ENCODE measurements at regions of chr2 and their contacts with region 1.

Region 1: GRCh38 chr2:61176755-61177726 is 15.1 kb downstream of the C2orf74 start:
- DNase-seq: peak; percentile 88 to 95 (median 94)
- ATAC-seq: peak; percentile 88
- H3K4me3 ChIP-seq: peak overlapping the region; percentile 74 to 87
- H3K4me3 Mint-ChIP-seq: peak overlapping the region; percentile 94
- H3K27ac ChIP-seq: peak overlapping the region; percentile 80 to 95
- H3K27ac Mint-ChIP-seq: peak overlapping the region; percentile 95
- H3K4me1 ChIP-seq: peaks cover 45% of the 10 kb centered on the region
- H3K4me1 Mint-ChIP-seq: peaks cover 52% of the 10 kb centered on the region
- H3K27me3 ChIP-seq: no peaks in the 10 kb centered on the region
- H3K27me3 Mint-ChIP-seq: no peaks in the 10 kb centered on the region
- CTCF ChIP-seq: no peak

Region 2: DNA sequence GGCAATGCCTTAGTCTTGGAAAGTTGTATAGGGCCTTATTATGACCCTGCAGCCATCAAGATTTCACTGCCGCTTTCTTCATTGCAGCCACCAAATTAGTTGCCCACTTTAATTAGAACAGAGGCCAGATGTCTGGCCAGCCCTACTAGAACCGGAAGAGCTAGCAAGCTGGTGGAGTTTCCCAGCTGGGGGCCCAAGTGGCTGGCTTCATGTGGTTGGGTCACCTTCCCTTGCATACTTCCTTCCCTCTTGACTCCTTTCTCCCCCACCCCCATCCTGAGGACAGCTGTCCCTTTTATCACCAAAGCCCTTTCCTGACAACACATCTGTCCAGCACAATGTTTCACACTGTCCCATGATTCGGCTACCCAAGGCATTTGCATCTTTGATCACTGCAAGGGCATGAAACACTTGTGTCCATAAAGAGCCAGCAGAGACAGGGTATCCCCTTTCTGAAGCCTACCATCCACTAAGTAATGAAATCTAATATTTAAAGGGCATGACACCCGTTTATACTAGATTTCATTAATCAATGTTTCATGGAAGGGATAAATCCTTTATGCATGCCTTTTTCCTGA is 810.8 kb before region 1 on chr2:
- CTCF ChIA-PET with region 1: no interaction called
- POLR2A ChIA-PET with region 1: no interaction called
- intact Hi-C with region 1: no loop called
- DNase-seq: peak in 1 of 9 experiments; percentile 14
- ATAC-seq: no peak
- H3K4me3 ChIP-seq: no peak overlapping the region
- H3K4me3 Mint-ChIP-seq: no peak overlapping the region
- H3K27ac ChIP-seq: no peak overlapping the region
- H3K27ac Mint-ChIP-seq: no peak overlapping the region
- H3K4me1 ChIP-seq: no peaks in the 10 kb centered on the region
- H3K4me1 Mint-ChIP-seq: no peaks in the 10 kb centered on the region
- H3K27me3 ChIP-seq: no peaks in the 10 kb centered on the region
- H3K27me3 Mint-ChIP-seq: no peaks in the 10 kb centered on the region
- CTCF ChIP-seq: no peak

Region 3: DNA sequence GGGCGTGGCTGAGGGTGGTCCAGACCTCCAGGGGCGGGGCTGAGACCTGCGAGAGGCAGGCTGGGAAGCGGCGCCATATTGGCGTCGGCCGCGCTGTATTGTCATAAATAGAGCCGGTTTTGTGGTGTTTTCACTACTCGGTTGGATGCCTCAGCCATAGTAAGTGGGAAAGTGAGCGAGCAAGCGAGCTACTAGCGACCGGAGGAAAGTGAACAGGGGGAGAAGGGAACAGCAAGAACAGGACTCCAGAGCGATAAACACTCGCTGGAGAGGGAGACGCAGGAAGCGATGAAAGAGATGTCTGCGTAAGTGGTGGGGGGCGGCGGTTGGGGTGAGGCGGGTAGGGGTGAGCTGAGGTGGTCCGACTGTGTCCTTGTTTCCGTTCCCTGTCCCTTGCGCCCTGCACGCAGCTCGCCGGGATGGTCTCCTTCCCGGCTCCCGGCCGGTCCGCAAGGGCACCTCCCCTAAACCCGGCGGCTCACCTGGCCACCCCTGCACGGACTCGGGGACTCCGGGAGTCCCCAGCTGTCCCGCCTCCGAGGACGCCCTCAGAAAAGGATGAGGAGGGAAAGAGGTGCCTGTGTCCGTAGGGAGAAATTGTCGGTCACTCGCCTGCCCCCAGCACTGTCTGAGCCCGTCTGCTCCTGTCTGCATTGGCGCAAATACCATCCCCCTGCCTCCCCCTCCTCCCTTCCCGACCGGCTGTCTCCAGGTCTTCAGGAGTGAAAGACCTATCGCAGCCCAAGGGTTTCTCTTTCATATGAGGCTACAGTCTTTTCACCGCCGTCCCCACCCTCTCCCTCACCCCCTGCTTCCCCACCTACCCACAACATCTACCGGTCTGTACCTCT is 420.6 kb before region 1 on chr2 and contains the start of gene PAPOLG:
- CTCF ChIA-PET with region 1: no interaction called
- POLR2A ChIA-PET with region 1: no interaction called
- intact Hi-C with region 1: loop called (anchors 2 to 5 kb)
- DNase-seq: peak; percentile 94 to 98 (median 97)
- ATAC-seq: peak; percentile 98
- H3K4me3 ChIP-seq: peak within 1 kb of the TSS; percentile 85 to 98
- H3K4me3 Mint-ChIP-seq: peak within 1 kb of the TSS; percentile 100
- H3K27ac ChIP-seq: peak within 1 kb of the TSS; percentile 86 to 91
- H3K27ac Mint-ChIP-seq: peak within 1 kb of the TSS; percentile 100
- H3K4me1 ChIP-seq: peaks cover 20% of the 10 kb centered on the region
- H3K4me1 Mint-ChIP-seq: peaks cover 43% of the 10 kb centered on the region
- H3K27me3 ChIP-seq: no peaks in the 10 kb centered on the region
- H3K27me3 Mint-ChIP-seq: no peaks in the 10 kb centered on the region
- CTCF ChIP-seq: no peak
- total RNA-seq, gene PAPOLG: 19.1 to 22.3 TPM

Region 4: GRCh38 chr2:61065715-61066709 is 111.0 kb before region 1 on chr2 and contains the start of gene SANBR:
- CTCF ChIA-PET with region 1: interaction called, 3 read pairs
- POLR2A ChIA-PET with region 1: no interaction called
- intact Hi-C with region 1: loop called (anchors 1 to 2 kb)
- DNase-seq: peak; percentile 65 to 92 (median 79)
- ATAC-seq: peak; percentile 97
- H3K4me3 ChIP-seq: peak within 1 kb of the TSS; percentile 50 to 59
- H3K4me3 Mint-ChIP-seq: peak within 1 kb of the TSS; percentile 94
- H3K27ac ChIP-seq: no peak within 1 kb of the TSS
- H3K27ac Mint-ChIP-seq: peak within 1 kb of the TSS; percentile 82
- H3K4me1 ChIP-seq: peaks cover 4% of the 10 kb centered on the region
- H3K4me1 Mint-ChIP-seq: peaks cover 7% of the 10 kb centered on the region
- H3K27me3 ChIP-seq: no peaks in the 10 kb centered on the region
- H3K27me3 Mint-ChIP-seq: no peaks in the 10 kb centered on the region
- CTCF ChIP-seq: no peak
- total RNA-seq, gene SANBR: 0.52 to 0.67 TPM

Region 5: DNA sequence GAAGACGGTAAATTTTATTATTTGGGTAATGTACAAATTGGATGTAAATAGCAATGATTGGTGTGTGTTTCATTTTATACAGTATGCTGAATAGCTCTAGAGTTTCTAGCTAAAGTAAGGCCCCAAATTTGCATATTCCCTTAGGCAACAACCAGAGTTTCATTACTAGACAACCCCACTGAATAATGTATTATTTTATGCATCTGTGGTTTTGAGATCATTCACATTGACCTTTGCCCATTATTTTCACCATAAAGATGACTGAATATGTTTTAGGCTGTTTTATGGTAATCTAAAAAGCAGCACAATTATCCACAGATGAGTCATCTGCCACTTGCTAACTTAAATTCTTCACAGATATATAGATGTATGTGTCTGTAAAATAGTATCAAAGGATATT is 59.5 kb before region 1 on chr2:
- CTCF ChIA-PET with region 1: no interaction called
- POLR2A ChIA-PET with region 1: no interaction called
- intact Hi-C with region 1: no loop called
- DNase-seq: no peak
- ATAC-seq: no peak
- H3K4me3 ChIP-seq: no peak overlapping the region
- H3K4me3 Mint-ChIP-seq: no peak overlapping the region
- H3K27ac ChIP-seq: no peak overlapping the region
- H3K27ac Mint-ChIP-seq: no peak overlapping the region
- H3K4me1 ChIP-seq: no peaks in the 10 kb centered on the region
- H3K4me1 Mint-ChIP-seq: no peaks in the 10 kb centered on the region
- H3K27me3 ChIP-seq: no peaks in the 10 kb centered on the region
- H3K27me3 Mint-ChIP-seq: no peaks in the 10 kb centered on the region
- CTCF ChIP-seq: no peak

Region 6: DNA sequence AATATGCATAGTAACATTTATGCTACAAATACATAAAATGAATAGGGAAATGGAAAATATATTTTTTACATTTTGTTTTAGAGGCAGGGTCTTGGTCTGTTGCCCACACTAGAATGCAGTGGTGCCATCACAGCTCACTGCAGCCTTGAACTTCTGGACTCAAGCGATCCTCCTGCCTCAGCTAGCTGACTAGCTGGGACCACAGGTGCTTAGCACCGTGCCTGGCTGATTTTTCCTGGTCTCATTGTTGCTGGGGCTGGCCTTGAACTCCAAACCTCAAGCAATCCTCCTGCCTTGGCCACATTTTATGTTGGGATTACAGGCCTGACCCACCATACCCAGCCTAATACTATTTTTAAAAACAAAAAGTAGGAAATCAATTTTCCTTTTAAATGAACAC is 327.9 kb after region 1 on chr2:
- CTCF ChIA-PET with region 1: no interaction called
- POLR2A ChIA-PET with region 1: no interaction called
- intact Hi-C with region 1: loop called in 1 of 2 experiments (anchors 10 kb)
- DNase-seq: no peak
- ATAC-seq: no peak
- H3K4me3 ChIP-seq: no peak overlapping the region
- H3K4me3 Mint-ChIP-seq: no peak overlapping the region
- H3K27ac ChIP-seq: no peak overlapping the region
- H3K27ac Mint-ChIP-seq: no peak overlapping the region
- H3K4me1 ChIP-seq: no peaks in the 10 kb centered on the region
- H3K4me1 Mint-ChIP-seq: peaks cover 23% of the 10 kb centered on the region
- H3K27me3 ChIP-seq: no peaks in the 10 kb centered on the region
- H3K27me3 Mint-ChIP-seq: no peaks in the 10 kb centered on the region
- CTCF ChIP-seq: no peak

Region 7: DNA sequence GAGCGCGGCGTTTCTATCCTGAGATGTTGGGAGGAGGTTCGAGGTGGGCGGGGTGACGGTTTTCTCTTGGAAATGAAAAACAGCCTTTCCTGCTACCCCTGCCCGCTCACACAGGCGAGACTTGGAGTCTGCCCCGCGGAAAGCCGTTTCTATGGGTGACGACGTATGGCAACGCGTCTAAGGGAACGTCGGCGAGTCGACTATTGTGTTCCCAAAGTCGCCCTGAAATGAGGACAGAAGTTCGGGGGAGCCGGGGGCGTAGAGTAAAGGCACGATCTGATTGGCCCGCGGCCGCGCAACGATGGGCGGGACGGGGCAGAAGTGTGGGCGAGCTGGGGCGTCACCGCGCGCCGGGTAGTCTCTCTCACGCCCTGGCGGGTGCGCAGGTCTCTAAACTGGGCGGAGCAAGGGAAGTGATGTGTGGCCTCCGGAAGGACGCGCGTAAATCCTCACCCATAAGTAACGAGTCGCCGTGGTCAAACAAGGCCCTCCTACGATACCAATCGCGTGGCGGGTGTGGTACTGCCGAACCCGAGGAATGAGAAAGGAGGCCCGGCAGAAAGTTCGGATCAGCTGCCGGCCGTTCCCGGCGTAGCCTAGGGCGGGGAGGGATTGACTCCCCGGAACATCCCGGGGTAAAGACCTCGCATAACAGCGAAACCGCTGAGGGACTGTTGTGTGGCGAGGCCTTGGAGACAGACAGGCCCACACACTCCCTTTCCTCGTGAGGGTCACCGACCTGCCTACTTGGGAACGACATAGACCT is 587.2 kb after region 1 on chr2:
- CTCF ChIA-PET with region 1: no interaction called
- POLR2A ChIA-PET with region 1: no interaction called
- intact Hi-C with region 1: loop called (anchors 1 to 5 kb)
- DNase-seq: peak; percentile 91 to 99 (median 94)
- ATAC-seq: peak; percentile 97
- H3K4me3 ChIP-seq: peak overlapping the region; percentile 90 to 91
- H3K4me3 Mint-ChIP-seq: peak overlapping the region; percentile 96
- H3K27ac ChIP-seq: peak overlapping the region; percentile 99 to 100
- H3K27ac Mint-ChIP-seq: peak overlapping the region; percentile 98
- H3K4me1 ChIP-seq: no peaks in the 10 kb centered on the region
- H3K4me1 Mint-ChIP-seq: peaks cover 12% of the 10 kb centered on the region
- H3K27me3 ChIP-seq: no peaks in the 10 kb centered on the region
- H3K27me3 Mint-ChIP-seq: no peaks in the 10 kb centered on the region
- CTCF ChIP-seq: no peak

Region 8: DNA sequence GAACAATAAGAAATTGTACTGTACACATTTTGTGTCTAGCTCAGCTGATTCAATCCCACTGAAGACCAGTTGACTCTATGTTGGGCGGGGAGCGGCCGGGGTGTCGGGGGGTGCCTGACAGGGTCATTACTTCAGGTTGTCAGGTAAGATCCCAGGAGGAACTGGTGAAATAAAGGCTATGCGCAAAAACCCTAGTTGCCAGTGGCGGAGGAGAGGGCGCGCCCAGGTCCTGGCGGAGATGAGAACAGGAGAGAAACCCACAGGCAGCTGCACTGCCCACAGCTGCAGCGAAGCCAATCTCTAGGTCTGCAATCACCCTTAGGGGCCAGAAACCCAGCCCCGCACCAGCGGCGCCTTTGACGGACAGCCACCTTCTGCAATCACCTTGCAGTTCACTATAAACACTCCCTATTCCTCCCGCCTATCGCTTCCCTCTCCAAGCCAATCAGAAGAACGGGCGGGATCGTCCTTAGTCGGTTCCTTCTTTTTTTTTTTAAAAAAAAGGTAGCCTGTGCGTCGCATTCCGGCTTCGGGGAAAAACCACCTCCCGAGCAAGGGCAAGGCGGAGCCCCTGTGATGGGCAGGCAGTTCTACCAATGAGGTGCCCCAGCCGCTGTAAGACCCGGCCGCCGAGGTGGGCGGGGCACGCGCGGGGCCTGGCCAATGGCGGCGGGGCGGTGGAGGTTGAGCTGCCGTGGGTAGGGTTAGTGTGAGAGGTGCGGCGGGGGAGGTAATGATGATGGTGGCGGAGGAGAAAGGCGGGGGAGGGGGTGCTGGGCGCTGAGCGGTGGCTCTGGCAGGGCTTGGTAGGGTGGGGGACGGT is 1528.2 kb after region 1 on chr2 and contains the start of gene EHBP1:
- CTCF ChIA-PET with region 1: no interaction called
- POLR2A ChIA-PET with region 1: no interaction called
- intact Hi-C with region 1: loop called in 1 of 2 experiments (anchors 5 kb)
- DNase-seq: peak; percentile 93 to 99 (median 97)
- ATAC-seq: peak; percentile 96
- H3K4me3 ChIP-seq: peak within 1 kb of the TSS; percentile 74 to 77
- H3K4me3 Mint-ChIP-seq: peak within 1 kb of the TSS; percentile 85
- H3K27ac ChIP-seq: peak within 1 kb of the TSS; percentile 36 to 65
- H3K27ac Mint-ChIP-seq: peak within 1 kb of the TSS; percentile 79
- H3K4me1 ChIP-seq: peaks cover 11% of the 10 kb centered on the region
- H3K4me1 Mint-ChIP-seq: peaks cover 41% of the 10 kb centered on the region
- H3K27me3 ChIP-seq: no peaks in the 10 kb centered on the region
- H3K27me3 Mint-ChIP-seq: no peaks in the 10 kb centered on the region
- CTCF ChIP-seq: no peak
- total RNA-seq, gene EHBP1: 16.2 to 16.7 TPM